CD8-positive, alpha-beta T cell (primary cell): ENCODE measurements at regions of chr5 and their contacts with region 1.

Region 1: GRCh38 chr5:58629271-58630159 is 46.6 kb downstream of the RAB3C start:
- DNase-seq: no peak
- ATAC-seq: no peak
- H3K4me3 ChIP-seq: no peak overlapping the region
- H3K4me3 Mint-ChIP-seq: no peak overlapping the region
- H3K27ac ChIP-seq: no peak overlapping the region
- H3K27ac Mint-ChIP-seq: no peak overlapping the region
- H3K4me1 ChIP-seq: no peaks in the 10 kb centered on the region
- H3K4me1 Mint-ChIP-seq: no peaks in the 10 kb centered on the region
- H3K27me3 ChIP-seq: no peaks in the 10 kb centered on the region
- H3K27me3 Mint-ChIP-seq: no peaks in the 10 kb centered on the region
- CTCF ChIP-seq: no peak

Region 2: DNA sequence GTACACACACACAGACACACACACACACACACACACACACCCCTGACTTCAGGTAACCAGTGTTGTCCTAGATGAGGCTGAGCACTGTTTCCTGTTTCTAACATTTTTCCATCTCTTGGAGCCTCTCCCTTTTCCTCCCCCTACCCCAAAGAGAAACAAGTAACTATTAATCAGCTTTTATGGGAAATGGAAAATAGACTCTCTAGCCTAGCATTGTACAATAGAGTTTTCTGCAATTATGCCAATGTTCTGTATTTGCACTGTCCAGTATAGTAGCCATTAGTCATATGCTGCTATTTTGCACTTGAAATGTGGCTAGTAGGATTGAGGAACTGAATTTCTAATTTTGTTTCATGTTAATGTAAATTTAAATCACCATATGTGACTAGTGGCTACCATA is 13.5 kb before region 1 on chr5:
- CTCF ChIA-PET with region 1: no interaction called
- POLR2A ChIA-PET with region 1: no interaction called
- intact Hi-C with region 1: no loop called
- DNase-seq: no peak
- ATAC-seq: no peak
- H3K4me3 ChIP-seq: no peak overlapping the region
- H3K4me3 Mint-ChIP-seq: no peak overlapping the region
- H3K27ac ChIP-seq: no peak overlapping the region
- H3K27ac Mint-ChIP-seq: no peak overlapping the region
- H3K4me1 ChIP-seq: no peaks in the 10 kb centered on the region
- H3K4me1 Mint-ChIP-seq: no peaks in the 10 kb centered on the region
- H3K27me3 ChIP-seq: no peaks in the 10 kb centered on the region
- H3K27me3 Mint-ChIP-seq: no peaks in the 10 kb centered on the region
- CTCF ChIP-seq: no peak

Region 3: GRCh38 chr5:58671155-58671554 is 41.6 kb after region 1 on chr5:
- CTCF ChIA-PET with region 1: no interaction called
- POLR2A ChIA-PET with region 1: no interaction called
- intact Hi-C with region 1: loop called in 1 of 2 experiments (anchors 1 kb)
- DNase-seq: no peak
- ATAC-seq: no peak
- H3K4me3 ChIP-seq: no peak overlapping the region
- H3K4me3 Mint-ChIP-seq: no peak overlapping the region
- H3K27ac ChIP-seq: no peak overlapping the region
- H3K27ac Mint-ChIP-seq: no peak overlapping the region
- H3K4me1 ChIP-seq: no peaks in the 10 kb centered on the region
- H3K4me1 Mint-ChIP-seq: no peaks in the 10 kb centered on the region
- H3K27me3 ChIP-seq: no peaks in the 10 kb centered on the region
- H3K27me3 Mint-ChIP-seq: no peaks in the 10 kb centered on the region
- CTCF ChIP-seq: no peak